Natural killer cell (primary cell): ENCODE measurements at regions of chr12 and their contacts with region 1.

Region 1: DNA sequence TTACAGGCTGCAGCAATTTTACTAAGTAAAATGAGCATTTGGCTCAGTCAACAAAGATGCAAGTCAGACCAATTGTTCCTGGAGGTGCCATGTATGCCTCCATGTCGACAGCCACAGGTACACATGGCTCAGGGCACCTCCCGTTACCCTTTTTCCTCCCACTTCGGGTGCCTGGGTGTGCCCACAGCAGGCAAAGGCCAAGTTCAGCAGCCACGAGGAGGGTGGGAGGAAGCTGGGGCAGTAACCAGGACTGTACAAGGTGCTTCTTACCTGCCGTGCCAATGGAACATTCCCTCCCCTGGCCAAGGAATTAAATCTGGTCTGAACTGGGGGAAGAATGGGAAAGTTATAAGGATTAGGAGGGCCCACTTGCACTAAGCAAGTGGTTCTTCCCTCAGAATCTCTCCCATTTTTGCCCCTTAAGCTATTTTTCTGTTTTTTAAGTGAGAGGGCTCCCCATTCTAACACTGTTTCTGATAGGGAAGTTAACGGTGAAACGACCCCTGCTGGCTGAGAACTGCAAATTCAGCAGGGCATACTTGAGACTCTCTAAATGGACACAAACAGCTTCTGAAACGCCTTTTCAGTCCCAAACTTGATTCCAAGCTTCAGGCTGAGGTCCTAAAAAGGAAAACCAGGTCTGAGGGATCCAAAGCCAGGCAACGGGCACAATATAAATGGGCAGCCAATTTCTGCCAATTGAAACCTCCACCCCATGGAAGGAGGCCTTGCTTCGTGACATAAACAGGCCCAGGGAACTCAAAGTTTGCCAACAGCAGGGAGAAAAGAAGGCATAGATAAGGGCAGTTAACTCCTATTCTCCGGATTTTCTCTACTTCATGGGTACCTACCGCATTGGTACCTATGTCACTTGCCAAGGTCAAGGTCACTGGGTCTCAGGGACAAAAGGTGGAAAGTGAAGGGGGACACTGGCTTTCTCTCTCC is 24.8 kb downstream of the CLECL1 start:
- DNase-seq: peak; percentile 56 to 89
- ATAC-seq: peak; percentile 72 to 96 (median 90)
- H3K4me3 ChIP-seq: no peak overlapping the region
- H3K4me3 Mint-ChIP-seq: peak overlapping the region; percentile 55
- H3K27ac ChIP-seq: peak overlapping the region; percentile 50
- H3K27ac Mint-ChIP-seq: peak overlapping the region; percentile 74 to 78
- H3K4me1 ChIP-seq: peaks cover 17% of the 10 kb centered on the region
- H3K4me1 Mint-ChIP-seq: peaks cover 24 to 43% of the 10 kb centered on the region in 2 donors
- H3K27me3 ChIP-seq: no peaks in the 10 kb centered on the region
- H3K27me3 Mint-ChIP-seq: no peaks in the 10 kb centered on the region
- CTCF ChIP-seq: peak; percentile 71

Region 2: DNA sequence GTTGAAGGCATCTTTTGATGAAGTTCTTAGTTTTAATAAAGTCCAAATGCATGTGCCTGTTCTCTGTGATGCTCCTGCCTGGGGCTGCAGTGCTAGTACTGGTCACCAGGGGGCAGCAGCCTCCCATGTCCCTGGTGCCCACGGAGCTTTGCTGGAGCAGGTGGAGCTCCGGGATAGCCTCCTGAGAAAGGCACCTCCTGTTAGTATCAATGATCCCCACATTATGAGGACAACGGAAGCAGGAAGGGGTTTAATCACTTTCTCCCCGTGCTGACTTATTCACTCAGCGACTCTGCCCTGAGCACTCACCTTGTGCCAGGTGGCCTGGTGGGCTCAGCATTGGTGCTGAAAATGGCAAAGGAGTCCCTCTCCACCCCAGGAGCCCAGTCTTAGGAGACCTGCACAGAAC is 376.9 kb before region 1 on chr12:
- intact Hi-C with region 1: loop called (anchors 1 kb)
- DNase-seq: peak; percentile 65 to 84
- ATAC-seq: peak; percentile 84 to 93 (median 90)
- H3K4me3 ChIP-seq: no peak overlapping the region
- H3K4me3 Mint-ChIP-seq: no peak overlapping the region
- H3K27ac ChIP-seq: no peak overlapping the region
- H3K27ac Mint-ChIP-seq: no peak overlapping the region
- H3K4me1 ChIP-seq: peaks cover 19% of the 10 kb centered on the region
- H3K4me1 Mint-ChIP-seq: peaks cover 20 to 21% of the 10 kb centered on the region in 2 donors
- H3K27me3 ChIP-seq: no peaks in the 10 kb centered on the region
- H3K27me3 Mint-ChIP-seq: no peaks in the 10 kb centered on the region
- CTCF ChIP-seq: peak; percentile 88

Region 3: DNA sequence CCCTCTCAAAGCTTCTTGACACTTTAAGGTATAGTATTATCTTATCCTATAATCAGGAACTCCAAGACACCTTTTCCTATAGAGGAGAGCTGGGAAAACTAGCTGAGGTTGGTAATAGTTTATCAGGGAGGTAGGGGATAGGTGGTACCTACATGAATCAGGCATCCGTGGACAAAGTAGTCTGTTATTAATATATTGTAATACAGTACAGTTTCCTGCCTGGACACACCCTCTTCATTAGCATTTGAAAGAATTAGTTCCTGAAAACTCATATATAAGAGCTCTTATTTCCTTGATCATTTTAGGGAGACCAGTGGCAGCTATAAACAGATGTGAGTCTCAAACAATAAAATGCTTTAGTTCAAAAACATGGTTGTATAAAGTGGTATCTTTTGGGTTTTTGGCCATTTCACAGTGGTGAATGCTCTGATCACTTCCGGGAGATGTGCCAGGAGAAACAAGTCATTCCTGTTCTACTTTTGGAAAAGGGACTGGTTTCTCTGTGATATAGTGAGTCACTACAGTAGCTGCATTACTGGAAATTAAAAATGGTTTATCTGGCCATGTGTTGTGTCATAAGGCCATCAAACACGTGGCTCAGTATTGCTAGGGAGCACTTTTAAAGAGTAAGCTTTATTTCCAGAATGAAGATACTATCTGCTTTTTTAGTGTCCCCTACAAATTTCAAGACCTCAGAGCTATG is 198.5 kb before region 1 on chr12:
- intact Hi-C with region 1: loop called (anchors 2 kb)
- DNase-seq: no peak
- ATAC-seq: no peak
- H3K4me3 ChIP-seq: no peak overlapping the region
- H3K4me3 Mint-ChIP-seq: no peak overlapping the region
- H3K27ac ChIP-seq: no peak overlapping the region
- H3K27ac Mint-ChIP-seq: no peak overlapping the region
- H3K4me1 ChIP-seq: no peaks in the 10 kb centered on the region
- H3K4me1 Mint-ChIP-seq: no peaks in the 10 kb centered on the region
- H3K27me3 ChIP-seq: no peaks in the 10 kb centered on the region
- H3K27me3 Mint-ChIP-seq: no peaks in the 10 kb centered on the region
- CTCF ChIP-seq: no peak

Region 4: DNA sequence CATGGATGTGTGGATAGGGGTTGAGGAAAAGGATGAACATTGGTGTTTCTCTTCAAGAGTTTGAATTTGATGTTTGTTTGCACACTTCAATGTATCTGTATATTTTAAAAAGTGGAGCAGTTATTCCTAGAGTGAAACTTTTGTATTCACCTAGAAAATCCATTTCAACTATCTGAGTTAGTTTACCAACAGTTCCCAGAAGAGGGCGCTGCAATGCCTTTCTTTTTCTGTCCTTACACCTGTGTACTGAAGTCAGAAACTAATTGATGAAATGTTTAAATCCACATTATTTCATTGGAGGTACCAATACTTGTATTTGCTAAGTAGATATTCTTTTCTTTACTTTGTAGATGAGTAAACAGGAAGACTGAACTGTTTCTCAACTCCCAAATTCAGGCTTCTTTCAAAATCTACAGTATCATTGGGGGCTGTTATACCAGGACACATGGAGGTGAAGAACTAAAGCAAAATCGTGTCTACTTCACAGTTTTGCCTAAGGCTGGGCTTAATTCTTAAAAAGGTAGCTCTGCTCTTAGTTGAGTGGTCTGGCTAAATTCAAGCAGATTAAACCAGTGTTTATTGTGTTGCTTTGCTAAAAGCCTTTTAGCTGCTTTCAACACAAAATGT is 73.8 kb before region 1 on chr12:
- intact Hi-C with region 1: loop called (anchors 1 kb)
- DNase-seq: peak; percentile 56 to 91
- ATAC-seq: peak; percentile 73 to 82 (median 81)
- H3K4me3 ChIP-seq: no peak overlapping the region
- H3K4me3 Mint-ChIP-seq: no peak overlapping the region
- H3K27ac ChIP-seq: no peak overlapping the region
- H3K27ac Mint-ChIP-seq: peak overlapping the region in 1 of 2 donors; percentile 25
- H3K4me1 ChIP-seq: no peaks in the 10 kb centered on the region
- H3K4me1 Mint-ChIP-seq: peaks cover 28 to 33% of the 10 kb centered on the region in 2 donors
- H3K27me3 ChIP-seq: no peaks in the 10 kb centered on the region
- H3K27me3 Mint-ChIP-seq: no peaks in the 10 kb centered on the region
- CTCF ChIP-seq: peak; percentile 91